Activated CD8-positive, alpha-beta T cell treated with anti-CD3 and anti-CD28 coated beads for 36 hours (primary cell): ENCODE measurements at regions of chr16 and their contacts with region 1.

Region 1: DNA sequence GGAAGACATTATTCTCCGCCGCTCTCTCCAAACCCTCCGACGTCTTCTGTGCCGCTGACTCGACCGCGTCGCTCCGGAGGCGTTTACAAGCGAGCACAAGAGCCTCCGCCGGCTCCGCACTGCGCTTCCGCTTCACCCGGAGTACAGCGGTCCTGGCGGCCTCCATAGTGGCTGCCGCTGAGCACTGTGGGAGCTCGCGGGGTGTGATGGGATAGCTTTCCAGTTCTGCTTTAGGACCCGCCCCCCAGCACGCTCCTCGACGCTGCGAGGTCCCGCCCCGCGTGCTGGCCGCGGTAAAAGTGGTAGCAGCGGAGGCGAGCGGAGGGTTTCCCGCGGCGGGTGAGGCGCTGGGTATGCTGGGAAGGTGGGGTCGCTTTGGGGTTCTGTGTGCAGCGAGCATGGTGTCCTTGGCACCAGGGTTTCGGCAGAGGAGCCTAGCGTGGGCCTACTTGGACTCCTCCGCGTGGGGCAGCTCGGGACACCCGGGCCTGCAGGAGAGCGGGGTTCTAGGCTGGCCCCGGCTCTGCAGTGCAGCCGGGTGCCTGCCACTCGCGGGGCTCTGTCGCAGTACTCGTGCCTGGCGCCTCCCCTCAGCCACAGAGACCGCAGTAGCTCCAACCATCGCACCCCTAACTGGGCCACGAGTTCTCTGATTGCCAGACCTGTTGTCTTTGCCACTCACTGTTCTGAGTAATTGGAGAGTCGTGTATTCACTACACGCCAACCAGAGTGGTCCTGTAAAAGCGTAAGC is at the starts of genes PRMT7 and SLC7A6OS:
- DNase-seq: peak; percentile 96
- ATAC-seq: peak; percentile 99
- H3K4me3 Mint-ChIP-seq: peak within 1 kb of the TSS; percentile 83
- H3K27ac Mint-ChIP-seq: peak within 1 kb of the TSS; percentile 89
- H3K4me1 Mint-ChIP-seq: peaks cover 46% of the 10 kb centered on the region
- H3K27me3 Mint-ChIP-seq: no peaks in the 10 kb centered on the region
- CTCF ChIP-seq: no peak
- total RNA-seq, gene PRMT7: 67.4 to 78.4 TPM
- total RNA-seq, gene SLC7A6OS: 20.2 to 23.1 TPM

Region 2: GRCh38 chr16:68257906-68258800 is 52.8 kb before region 1 on chr16:
- CTCF ChIA-PET with region 1: interaction called, 60 read pairs
- POLR2A ChIA-PET with region 1: interaction called, 28 read pairs
- intact Hi-C with region 1: no loop called
- DNase-seq: no peak
- ATAC-seq: no peak
- H3K4me3 Mint-ChIP-seq: no peak overlapping the region
- H3K27ac Mint-ChIP-seq: no peak overlapping the region
- H3K4me1 Mint-ChIP-seq: peaks cover 13% of the 10 kb centered on the region
- H3K27me3 Mint-ChIP-seq: no peaks in the 10 kb centered on the region
- CTCF ChIP-seq: no peak

Region 3: GRCh38 chr16:68289621-68290329 is 21.2 kb before region 1 on chr16:
- CTCF ChIA-PET with region 1: interaction called, 5 read pairs
- POLR2A ChIA-PET with region 1: interaction called, 13 read pairs
- intact Hi-C with region 1: loop called (anchors 2 kb)
- DNase-seq: peak; percentile 89
- ATAC-seq: peak; percentile 89
- H3K4me3 Mint-ChIP-seq: peak overlapping the region; percentile 29
- H3K27ac Mint-ChIP-seq: peak overlapping the region; percentile 95
- H3K4me1 Mint-ChIP-seq: peaks cover 82% of the 10 kb centered on the region
- H3K27me3 Mint-ChIP-seq: no peaks in the 10 kb centered on the region
- CTCF ChIP-seq: no peak

Region 4: DNA sequence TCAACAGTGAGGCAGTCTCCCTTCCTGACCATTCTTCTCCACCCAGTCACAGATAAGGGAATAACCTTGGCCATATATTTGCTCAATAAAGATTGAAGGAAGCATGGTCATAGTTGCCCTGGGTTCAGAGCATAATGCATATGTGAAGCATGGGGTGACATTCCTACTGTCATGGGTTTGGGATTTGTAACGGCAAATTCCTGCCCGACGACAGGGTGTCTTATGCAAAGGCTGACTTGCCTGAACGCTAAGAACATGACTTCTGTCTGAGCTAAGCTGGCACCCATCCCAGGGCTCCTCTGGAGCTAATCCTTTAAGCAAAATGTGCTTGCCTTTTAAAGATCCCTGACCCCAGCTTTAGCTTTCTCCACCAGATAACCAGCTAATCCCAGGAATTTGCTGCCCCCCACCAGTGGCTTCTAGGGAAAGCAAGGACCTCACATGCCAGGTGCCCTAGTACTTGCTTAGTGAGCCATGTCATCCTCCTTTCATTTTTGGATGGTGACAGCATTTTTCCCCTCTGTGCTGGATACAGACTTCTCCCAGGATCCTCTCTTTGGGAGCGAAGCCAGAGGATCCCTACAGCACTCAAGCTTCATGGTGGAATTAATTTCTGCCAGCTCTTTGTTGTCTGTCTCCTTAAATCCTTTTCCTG is 11.9 kb before region 1 on chr16:
- CTCF ChIA-PET with region 1: interaction called, 7 read pairs
- POLR2A ChIA-PET with region 1: interaction called, 30 read pairs
- intact Hi-C with region 1: no loop called
- DNase-seq: no peak
- ATAC-seq: no peak
- H3K4me3 Mint-ChIP-seq: no peak overlapping the region
- H3K27ac Mint-ChIP-seq: peak overlapping the region; percentile 71
- H3K4me1 Mint-ChIP-seq: peaks cover 6% of the 10 kb centered on the region
- H3K27me3 Mint-ChIP-seq: no peaks in the 10 kb centered on the region
- CTCF ChIP-seq: no peak